OCI-LY7 (cell line): ENCODE measurements at regions of chr19 and their contacts with region 1.

Region 1: GRCh38 chr19:56217039-56217949 is 15.2 kb downstream of the ZSCAN5C start:
- DNase-seq: no peak
- H3K4me3 ChIP-seq: no peak overlapping the region
- H3K27ac ChIP-seq: no peak overlapping the region
- H3K4me1 ChIP-seq: no peaks in the 10 kb centered on the region
- CTCF ChIP-seq: no peak

Region 2: GRCh38 chr19:56201973-56202372 is 15.3 kb before region 1 on chr19 and contains the start of gene ZSCAN5C:
- CTCF ChIA-PET with region 1: no interaction called
- POLR2A ChIA-PET with region 1: no interaction called
- intact Hi-C with region 1: loop called (anchors 1 kb)
- DNase-seq: no peak
- H3K4me3 ChIP-seq: no peak within 1 kb of the TSS
- H3K27ac ChIP-seq: no peak within 1 kb of the TSS
- H3K4me1 ChIP-seq: no peaks in the 10 kb centered on the region
- CTCF ChIP-seq: no peak
- total RNA-seq, gene ZSCAN5C: not detected in 2 replicates